ENCODE measurements at regions of chr12 and their contacts with region 1.

Region 1: GRCh38 chr12:54359033-54359761 is 5.1 kb downstream of the GPR84 start:
- DNase-seq: peak; percentile 97
- ATAC-seq: peak; percentile 99

Region 2: GRCh38 chr12:54126696-54127537 is 232.3 kb before region 1 on chr12:
- intact Hi-C with region 1: no loop called
- DNase-seq: no peak
- ATAC-seq: peak; percentile 91

Region 3: GRCh38 chr12:54220092-54220557 is 139.1 kb before region 1 on chr12:
- intact Hi-C with region 1: loop called (anchors 1 kb)
- DNase-seq: no peak
- ATAC-seq: peak; percentile 66

Region 4: DNA sequence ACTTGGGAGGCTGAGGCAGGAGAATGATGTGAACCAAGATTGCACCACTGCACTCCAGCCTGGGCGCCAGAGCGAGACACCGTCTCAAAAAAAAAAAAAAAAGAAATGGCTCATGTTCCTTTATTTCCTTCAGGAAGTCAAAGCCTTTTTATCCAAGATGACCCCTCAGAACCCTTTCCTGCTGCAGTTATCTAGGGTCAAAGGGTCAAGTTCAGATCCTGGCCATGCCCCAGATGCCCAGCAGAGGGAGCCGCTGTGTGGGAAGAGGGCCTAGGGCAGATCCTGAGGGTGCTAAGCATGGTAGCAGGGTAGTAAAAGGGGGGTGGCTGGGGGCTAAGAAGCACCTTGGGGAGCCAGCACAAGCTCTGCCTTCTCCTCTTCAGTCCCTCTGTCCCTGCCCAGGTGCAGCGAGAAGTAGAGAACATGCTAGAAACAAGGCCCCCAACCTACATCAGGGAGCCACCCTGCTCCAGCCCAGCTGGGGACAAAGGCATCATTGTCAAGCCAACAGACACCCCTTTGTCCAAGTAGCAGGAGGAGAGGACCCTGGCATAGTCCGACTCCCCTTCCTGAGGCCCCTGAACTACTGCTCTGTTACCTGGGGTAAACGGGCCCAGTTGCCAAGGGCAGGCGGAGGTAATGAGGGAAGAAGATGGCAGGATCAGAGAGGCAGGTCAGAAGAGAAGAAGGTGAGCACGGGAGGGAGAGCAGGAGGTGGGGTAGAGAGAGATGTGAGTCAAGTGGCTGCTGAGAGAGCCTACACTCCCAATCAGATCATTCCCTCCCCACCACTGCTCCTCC is 64.8 kb before region 1 on chr12:
- intact Hi-C with region 1: loop called (anchors 2 kb)
- DNase-seq: peak; percentile 80
- ATAC-seq: peak; percentile 48

Region 5: DNA sequence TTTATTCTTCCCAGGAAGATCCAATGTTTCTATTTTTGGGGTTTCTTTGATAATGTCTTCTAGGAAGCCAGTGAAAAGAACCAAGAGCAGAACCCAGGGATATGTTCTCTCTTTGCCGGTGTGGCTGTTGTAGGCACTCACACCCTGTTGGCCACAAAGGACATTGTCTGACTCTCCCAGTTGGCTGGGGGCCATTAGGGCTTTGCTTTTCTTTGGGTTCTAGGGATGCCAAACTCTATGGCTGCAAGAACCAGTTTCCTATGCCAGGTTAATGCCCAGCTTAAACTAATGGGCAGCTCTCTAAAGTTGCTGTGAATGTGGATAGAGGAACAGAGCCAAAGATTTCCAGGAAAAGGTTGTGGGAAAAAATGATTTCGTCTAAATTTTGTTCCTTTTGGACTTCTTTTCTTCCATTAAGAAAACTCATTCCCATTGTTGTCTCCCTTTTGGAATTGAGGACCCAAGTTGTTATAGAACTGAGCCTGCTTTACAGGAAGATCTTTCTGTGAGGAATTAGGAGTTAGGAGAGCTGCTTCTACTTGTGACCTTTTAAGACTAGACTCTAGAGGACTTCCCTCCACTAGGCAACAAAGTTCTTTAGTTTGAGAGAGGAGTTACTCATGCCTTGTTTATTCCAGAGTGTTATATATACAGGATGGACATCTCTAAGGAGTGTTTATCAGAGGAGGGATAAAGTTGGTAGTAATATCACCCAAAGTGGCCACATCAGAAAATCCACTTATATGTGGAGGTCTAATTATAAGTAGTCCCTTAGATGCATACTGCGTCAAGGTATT is 21.1 kb before region 1 on chr12:
- intact Hi-C with region 1: loop called (anchors 2 kb)
- DNase-seq: no peak
- ATAC-seq: peak; percentile 56

Measured in Right ventricle myocardium inferior (tissue), 1 donor.